ENCODE measurements at regions of chrX and their contacts with region 1.

Region 1: GRCh38 chrX:145715641-145716138 is 101.9 kb upstream of the SLITRK2 start:
- DNase-seq: no peak
- H3K4me3 Mint-ChIP-seq: no peak overlapping the region
- H3K27ac Mint-ChIP-seq: no peak overlapping the region
- H3K4me1 Mint-ChIP-seq: no peaks in the 10 kb centered on the region
- H3K27me3 Mint-ChIP-seq: no peaks in the 10 kb centered on the region

Region 2: GRCh38 chrX:145673841-145674240 is 41.8 kb before region 1 on chrX:
- CTCF ChIA-PET with region 1: no interaction called
- intact Hi-C with region 1: loop called (anchors 2 kb)
- DNase-seq: no peak
- H3K4me3 Mint-ChIP-seq: no peak overlapping the region
- H3K27ac Mint-ChIP-seq: no peak overlapping the region
- H3K4me1 Mint-ChIP-seq: no peaks in the 10 kb centered on the region
- H3K27me3 Mint-ChIP-seq: no peaks in the 10 kb centered on the region